Activated CD4-positive, alpha-beta memory T cell treated with anti-CD3 and anti-CD28 coated beads for 36 hours (primary cell): ENCODE measurements at regions of chr7 and their contacts with region 1.

Region 1: GRCh38 chr7:134432296-134433152 is 26.4 kb downstream of the AKR1B1 start:
- DNase-seq: peak; percentile 81
- H3K4me3 Mint-ChIP-seq: peak overlapping the region; percentile 70
- H3K27ac Mint-ChIP-seq: peak overlapping the region; percentile 80
- H3K4me1 Mint-ChIP-seq: peaks cover 13% of the 10 kb centered on the region
- H3K27me3 Mint-ChIP-seq: no peaks in the 10 kb centered on the region

Region 2: GRCh38 chr7:134316539-134317344 is 115.8 kb before region 1 on chr7 and contains the start of gene SLC35B4:
- CTCF ChIA-PET with region 1: interaction called, 7 read pairs
- POLR2A ChIA-PET with region 1: interaction called, 5 read pairs
- intact Hi-C with region 1: loop called (anchors 2 kb)
- DNase-seq: peak; percentile 97
- H3K4me3 Mint-ChIP-seq: peak within 1 kb of the TSS; percentile 90
- H3K27ac Mint-ChIP-seq: peak within 1 kb of the TSS; percentile 72
- H3K4me1 Mint-ChIP-seq: peaks cover 19% of the 10 kb centered on the region
- H3K27me3 Mint-ChIP-seq: no peaks in the 10 kb centered on the region
- total RNA-seq, gene SLC35B4: 10.9 to 14.5 TPM

Region 3: DNA sequence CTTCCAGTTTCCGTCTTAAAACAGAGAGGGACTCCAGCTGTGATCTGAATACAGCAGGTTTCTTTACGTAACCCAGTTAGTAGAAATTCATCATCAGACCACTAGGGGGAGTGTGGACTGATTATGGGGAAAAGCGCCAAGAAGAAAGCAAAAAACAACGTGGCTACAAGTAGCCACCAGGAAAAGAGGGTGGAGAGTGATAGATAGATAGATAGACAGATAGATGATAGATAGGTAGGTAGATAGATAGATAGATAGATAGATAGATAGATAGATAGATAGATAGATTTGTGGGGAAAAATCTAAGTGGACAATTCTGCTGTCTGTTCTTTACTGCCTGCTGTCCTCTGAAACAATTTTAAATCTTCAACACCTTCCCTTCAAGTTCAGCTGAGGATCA is 82.1 kb after region 1 on chr7:
- CTCF ChIA-PET with region 1: interaction called, 68 read pairs
- POLR2A ChIA-PET with region 1: no interaction called
- intact Hi-C with region 1: loop called (anchors 1 kb)
- DNase-seq: no peak
- H3K4me3 Mint-ChIP-seq: no peak overlapping the region
- H3K27ac Mint-ChIP-seq: no peak overlapping the region
- H3K4me1 Mint-ChIP-seq: peaks cover 6% of the 10 kb centered on the region
- H3K27me3 Mint-ChIP-seq: peaks cover 8% of the 10 kb centered on the region

Region 4: DNA sequence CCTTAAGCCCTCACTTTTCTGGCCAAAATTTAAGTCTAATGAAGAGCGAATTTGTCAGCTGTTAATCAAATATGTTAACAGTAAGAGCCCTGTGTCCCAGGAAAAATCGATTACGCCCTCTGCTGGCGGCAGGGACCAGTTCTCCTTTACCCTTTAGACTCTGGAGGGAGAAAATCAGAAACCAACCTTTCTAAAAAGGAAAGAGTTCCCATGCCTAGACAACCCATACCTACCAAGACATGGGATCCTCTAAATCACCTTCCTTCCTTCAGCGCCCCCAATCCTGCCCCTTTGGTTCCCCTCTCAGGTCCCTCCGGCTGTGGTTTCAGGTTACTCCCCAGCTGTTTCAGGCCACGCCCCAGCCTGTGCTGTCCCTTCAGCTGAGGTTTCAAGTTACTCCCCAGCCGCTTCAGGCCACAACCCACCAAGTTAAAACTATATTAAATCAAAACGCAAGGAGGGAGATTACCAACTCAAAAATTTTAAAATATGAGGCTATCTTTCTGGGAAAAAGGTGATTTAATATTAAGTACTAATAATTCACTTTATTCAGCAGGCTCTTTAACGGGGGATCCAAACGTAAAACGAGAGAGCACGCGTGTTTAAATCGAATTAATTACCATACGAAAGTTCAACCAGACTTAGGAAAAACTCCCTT is 115.0 kb after region 1 on chr7:
- CTCF ChIA-PET with region 1: interaction called, 92 read pairs
- POLR2A ChIA-PET with region 1: no interaction called
- intact Hi-C with region 1: loop called (anchors 1 kb)
- DNase-seq: peak; percentile 73
- H3K4me3 Mint-ChIP-seq: no peak overlapping the region
- H3K27ac Mint-ChIP-seq: no peak overlapping the region
- H3K4me1 Mint-ChIP-seq: peaks cover 4% of the 10 kb centered on the region
- H3K27me3 Mint-ChIP-seq: peaks cover 5% of the 10 kb centered on the region

Region 5: DNA sequence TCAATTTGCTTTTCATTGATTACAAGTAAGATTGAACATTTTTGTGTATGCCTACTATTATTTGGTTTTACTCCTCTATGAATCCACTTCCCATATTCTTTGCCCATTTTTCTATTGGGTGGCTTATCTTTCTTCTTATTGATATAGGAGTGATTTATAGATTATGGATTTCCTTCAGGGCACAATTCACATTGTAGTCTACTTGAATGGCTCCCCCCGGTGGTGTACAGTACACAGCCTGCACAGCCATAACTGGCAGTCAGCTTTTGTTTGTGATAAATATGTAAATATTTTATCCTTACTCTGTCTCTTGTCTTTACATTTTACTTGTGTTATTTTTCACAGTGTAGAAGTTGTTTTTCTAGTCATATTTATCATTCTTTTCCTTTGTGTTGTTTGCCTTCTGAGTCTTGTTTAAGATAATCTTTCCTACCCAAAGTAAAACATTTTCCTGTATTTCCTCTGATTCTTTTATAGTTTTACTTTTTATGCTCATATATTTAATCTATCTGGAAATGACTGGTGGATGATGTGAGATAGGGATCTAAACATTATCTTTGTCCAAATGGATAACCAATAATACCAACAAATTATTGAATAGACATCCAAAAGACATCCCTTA is 323.0 kb after region 1 on chr7:
- CTCF ChIA-PET with region 1: no interaction called
- POLR2A ChIA-PET with region 1: no interaction called
- intact Hi-C with region 1: loop called (anchors 2 kb)
- DNase-seq: peak; percentile 59
- H3K4me3 Mint-ChIP-seq: no peak overlapping the region
- H3K27ac Mint-ChIP-seq: no peak overlapping the region
- H3K4me1 Mint-ChIP-seq: peaks cover 5% of the 10 kb centered on the region
- H3K27me3 Mint-ChIP-seq: no peaks in the 10 kb centered on the region